Gastrocnemius medialis (tissue), 4 donors: ENCODE measurements at regions of chr15 and their contacts with region 1.

Region 1: GRCh38 chr15:65154720-65155119 is 21.1 kb upstream of the PDCD7 start:
- DNase-seq: no peak
- ATAC-seq: no peak
- H3K4me3 ChIP-seq: no peak overlapping the region
- H3K27ac ChIP-seq: no peak overlapping the region
- H3K4me1 ChIP-seq: no peaks in the 10 kb centered on the region
- H3K27me3 ChIP-seq: no peaks in the 10 kb centered on the region
- CTCF ChIP-seq: no peak
- POLR2A ChIP-seq: no peak

Region 2: DNA sequence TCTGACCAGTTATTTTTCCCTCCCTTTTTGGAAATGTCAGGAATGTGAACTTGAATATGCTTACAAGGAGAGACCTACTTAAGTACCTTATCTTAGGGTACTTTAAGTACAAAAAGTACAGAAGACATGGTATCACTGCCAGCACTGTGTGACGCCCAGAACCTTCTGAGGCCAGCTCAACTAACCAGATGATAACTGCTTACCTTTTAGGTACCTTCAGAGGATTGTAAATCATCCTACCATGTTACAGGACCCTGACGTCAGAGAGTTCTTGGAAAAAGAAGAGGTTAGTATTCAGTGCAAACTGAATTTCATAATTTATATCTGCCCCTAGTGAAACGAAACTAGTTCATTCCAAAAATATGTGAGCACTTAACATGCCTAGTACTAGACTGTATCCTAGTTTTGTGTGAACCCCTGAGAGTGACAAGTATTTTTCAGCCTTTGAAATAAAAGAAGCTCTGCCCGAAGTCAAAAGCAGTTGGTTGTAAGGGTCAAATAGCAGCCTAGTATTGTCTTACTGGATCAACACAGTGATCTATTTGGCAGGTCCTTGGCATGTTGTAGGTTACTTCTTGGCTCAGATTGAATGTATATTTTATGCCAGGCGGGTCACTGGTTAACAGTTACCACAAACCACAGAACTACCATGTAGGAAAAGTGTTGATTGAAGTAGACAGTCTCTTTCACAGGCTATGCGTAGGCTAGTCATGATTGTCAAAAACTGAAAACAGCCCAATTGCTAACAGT is 1027.0 kb before region 1 on chr15:
- in situ Hi-C with region 1: no loop called
- intact Hi-C with region 1: loop called (anchors 5 kb)
- DNase-seq: no peak
- ATAC-seq: peak; percentile 67 to 82
- H3K4me3 ChIP-seq: peak overlapping the region in 1 of 4 donors; percentile 20
- H3K27ac ChIP-seq: peak overlapping the region; percentile 6 to 75 (median 45)
- H3K4me1 ChIP-seq: peaks cover 5 to 10% of the 10 kb centered on the region in 2 donors
- H3K27me3 ChIP-seq: no peaks in the 10 kb centered on the region
- CTCF ChIP-seq: no peak
- POLR2A ChIP-seq: no peak

Region 3: DNA sequence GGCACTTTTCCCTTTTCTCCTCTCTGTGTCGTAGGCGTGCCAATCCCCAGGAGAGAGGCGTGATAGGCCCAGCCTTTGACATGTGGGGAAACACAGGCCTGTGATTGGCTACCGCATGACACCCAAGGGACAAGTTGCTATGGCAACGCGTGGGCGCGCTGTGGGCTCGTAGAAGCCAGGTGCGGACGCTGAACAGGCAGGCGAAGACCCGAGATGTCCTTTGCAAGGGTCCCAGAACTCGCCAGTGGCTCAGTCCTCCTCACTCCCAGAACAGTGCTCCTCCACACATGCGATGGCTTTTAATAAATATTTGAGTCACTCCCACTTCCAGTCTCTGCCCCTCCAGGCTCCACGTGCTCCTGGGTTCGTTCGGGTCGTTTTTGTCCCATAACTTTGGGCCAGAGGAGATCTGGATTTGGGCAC is 105.3 kb before region 1 on chr15:
- in situ Hi-C with region 1: no loop called
- intact Hi-C with region 1: no loop called
- DNase-seq: peak; percentile 86 to 92
- ATAC-seq: peak; percentile 96 to 97
- H3K4me3 ChIP-seq: peak overlapping the region; percentile 41 to 57 (median 50)
- H3K27ac ChIP-seq: no peak overlapping the region
- H3K4me1 ChIP-seq: peaks cover 15 to 18% of the 10 kb centered on the region in 2 donors
- H3K27me3 ChIP-seq: no peaks in the 10 kb centered on the region
- CTCF ChIP-seq: no peak
- POLR2A ChIP-seq: no peak

Region 4: DNA sequence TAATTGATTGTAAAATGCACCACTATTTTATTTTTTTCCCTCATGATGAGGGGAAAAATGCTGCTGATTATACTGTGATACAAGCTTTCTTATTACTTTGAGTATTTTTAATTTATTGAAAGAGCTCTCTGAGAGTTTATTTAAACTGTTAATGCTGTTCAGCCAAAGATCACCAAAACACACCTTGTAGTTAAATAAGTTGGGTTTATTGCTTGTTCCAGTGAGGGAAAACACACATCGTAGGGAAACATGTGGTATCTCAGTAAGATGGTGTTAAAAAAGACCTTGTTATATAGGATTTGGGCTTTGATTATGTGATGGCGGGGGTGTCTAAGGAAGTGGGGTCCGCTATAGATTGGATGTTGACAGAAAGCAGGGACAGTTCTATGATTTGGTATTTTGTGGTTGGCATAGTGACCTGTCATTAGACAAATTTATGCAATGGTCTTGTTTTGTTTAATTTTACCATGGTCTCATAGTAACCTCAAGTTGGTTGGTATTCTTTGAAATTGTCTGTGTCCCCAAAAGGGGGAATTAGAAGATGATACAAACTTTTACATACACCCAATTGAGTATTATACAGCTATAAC is 386.6 kb after region 1 on chr15:
- in situ Hi-C with region 1: no loop called
- intact Hi-C with region 1: no loop called
- DNase-seq: no peak
- ATAC-seq: no peak
- H3K4me3 ChIP-seq: no peak overlapping the region
- H3K27ac ChIP-seq: no peak overlapping the region
- H3K4me1 ChIP-seq: no peaks in the 10 kb centered on the region
- H3K27me3 ChIP-seq: no peaks in the 10 kb centered on the region
- CTCF ChIP-seq: no peak
- POLR2A ChIP-seq: no peak